BJ (cell line): ENCODE measurements at regions of chr19 and their contacts with region 1.

Region 1: DNA sequence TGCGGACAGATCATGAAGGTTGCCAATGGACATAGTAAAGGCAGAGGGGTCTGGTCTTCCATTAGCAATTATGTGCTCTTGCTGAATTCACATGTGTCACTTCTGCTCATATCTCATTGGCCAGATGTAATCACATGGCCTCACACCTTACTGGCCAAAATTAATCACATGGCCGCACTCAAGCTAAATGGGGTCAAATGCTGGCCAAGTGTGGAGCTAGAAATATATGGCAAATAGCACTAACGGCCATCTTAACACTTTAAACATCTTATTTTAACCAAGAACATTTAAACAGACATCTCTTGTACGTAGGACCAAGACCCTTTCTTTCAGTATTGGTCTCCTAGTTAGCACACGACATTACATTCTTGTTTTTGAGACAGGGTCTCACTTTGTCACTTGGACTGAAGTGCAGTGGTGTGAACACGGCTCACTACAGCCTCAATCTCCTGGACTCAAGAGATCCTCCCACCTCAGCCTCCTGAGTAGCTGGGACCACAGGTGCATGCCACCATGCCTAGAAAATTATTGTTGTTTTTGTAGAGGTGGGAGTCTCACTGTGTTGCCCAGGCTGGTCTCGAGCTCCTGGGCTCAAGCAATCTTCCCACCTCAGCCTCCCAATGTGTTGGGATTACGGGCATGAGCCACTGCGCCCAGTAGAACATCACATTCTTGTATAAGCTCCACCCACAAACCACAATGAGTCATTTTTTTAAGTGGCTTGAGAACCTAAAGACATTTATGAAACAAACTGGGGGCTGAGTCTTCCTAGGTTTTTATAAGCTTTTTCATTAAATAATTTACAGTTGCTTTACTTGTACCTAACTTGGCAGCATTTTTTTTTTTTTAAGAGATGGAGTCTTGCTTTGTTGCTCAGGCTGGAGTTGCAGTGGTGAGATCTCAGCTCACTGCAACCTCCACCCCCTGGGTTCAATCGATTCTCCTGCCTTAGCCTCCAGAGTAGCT is 2.9 kb upstream of the PTOV1 start:
- DNase-seq: peak; percentile 56
- H3K4me3 ChIP-seq: no peak overlapping the region
- H3K27me3 ChIP-seq: no peaks in the 10 kb centered on the region
- CTCF ChIP-seq: no peak

Region 2: DNA sequence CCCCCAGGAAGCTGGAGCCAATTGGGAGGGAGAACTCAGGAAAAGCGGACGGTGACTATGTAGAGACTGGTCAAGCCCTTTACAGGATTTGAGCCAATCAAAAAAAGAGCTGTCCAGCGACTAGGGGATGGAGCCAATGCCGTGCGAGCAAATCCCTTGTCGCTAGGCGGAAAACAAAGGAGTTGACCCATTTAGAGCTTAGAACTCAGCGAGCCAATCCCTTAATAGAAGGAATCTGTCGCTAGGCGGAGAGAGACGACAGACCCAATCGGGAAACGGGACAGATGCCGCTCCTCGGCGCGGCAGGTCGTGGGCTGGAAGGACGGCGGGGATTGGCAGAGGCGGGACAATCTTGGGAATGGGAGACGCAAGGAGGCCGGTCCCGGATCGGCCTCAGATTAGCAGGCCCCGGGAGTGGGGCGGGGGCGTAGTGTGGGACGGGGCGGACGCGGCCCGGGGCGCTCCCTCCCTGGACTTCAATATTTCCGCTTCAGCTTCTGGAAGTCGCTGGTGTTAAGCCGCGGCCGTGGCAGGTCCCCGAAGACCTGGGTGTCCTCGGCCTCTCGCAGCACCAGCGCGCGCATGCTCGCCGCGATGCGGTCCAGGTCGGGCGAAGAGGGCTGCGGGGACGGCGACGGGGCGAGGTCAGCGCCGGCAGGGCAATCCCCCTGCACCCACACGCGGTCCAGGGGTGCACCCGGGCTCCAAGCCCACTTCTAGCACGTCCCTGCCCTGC is 21.6 kb after region 1 on chr19:
- CTCF ChIA-PET with region 1: no interaction called
- POLR2A ChIA-PET with region 1: interaction called, 11 read pairs
- DNase-seq: peak; percentile 100
- H3K4me3 ChIP-seq: peak overlapping the region; percentile 45
- H3K27me3 ChIP-seq: no peaks in the 10 kb centered on the region
- CTCF ChIP-seq: no peak

Region 3: DNA sequence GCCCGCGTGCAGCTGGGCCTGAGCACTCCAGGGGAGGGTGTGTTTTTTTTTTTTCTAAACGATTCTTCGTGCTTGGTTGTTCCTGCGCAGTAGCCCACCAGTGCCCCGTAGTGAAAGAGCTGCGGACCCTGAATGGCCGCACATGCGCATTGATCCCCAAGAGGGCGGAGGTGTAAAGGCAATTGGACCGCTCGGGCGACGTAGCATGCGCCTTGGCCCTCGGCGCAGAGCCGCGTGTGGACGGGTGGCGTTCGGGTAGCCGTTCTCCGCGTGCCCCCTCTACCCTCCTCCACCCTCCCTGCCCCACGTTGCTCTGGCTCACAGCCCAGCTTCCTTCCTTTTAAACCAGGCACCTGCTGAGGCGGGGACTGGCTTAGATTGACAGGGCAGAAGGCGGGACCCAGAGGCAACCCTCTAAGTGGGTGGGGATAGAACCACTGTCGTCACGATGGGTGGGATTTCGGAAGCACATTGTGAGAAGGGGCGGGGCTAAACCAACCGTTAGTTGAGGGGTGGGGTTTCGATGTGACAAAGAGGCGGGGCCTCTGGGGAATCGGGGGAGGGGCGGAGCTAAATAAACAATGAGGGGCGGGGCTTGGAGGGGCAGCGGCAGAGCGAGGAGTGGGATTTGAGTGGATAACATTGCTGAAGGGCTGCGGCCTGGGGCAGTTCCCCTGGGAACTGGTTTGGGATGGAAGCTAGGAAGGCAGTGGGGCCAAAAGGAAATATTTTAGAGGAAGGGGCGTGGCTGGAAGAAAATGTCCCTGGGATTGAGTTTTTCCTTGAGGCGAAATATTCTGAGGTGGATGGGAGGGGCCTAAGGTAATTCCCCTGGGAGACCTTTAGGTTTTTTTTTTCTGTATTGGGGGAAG is 81.8 kb after region 1 on chr19:
- CTCF ChIA-PET with region 1: no interaction called
- POLR2A ChIA-PET with region 1: no interaction called
- DNase-seq: peak; percentile 73
- H3K4me3 ChIP-seq: peak overlapping the region; percentile 98
- H3K27me3 ChIP-seq: no peaks in the 10 kb centered on the region
- CTCF ChIP-seq: no peak

Region 4: DNA sequence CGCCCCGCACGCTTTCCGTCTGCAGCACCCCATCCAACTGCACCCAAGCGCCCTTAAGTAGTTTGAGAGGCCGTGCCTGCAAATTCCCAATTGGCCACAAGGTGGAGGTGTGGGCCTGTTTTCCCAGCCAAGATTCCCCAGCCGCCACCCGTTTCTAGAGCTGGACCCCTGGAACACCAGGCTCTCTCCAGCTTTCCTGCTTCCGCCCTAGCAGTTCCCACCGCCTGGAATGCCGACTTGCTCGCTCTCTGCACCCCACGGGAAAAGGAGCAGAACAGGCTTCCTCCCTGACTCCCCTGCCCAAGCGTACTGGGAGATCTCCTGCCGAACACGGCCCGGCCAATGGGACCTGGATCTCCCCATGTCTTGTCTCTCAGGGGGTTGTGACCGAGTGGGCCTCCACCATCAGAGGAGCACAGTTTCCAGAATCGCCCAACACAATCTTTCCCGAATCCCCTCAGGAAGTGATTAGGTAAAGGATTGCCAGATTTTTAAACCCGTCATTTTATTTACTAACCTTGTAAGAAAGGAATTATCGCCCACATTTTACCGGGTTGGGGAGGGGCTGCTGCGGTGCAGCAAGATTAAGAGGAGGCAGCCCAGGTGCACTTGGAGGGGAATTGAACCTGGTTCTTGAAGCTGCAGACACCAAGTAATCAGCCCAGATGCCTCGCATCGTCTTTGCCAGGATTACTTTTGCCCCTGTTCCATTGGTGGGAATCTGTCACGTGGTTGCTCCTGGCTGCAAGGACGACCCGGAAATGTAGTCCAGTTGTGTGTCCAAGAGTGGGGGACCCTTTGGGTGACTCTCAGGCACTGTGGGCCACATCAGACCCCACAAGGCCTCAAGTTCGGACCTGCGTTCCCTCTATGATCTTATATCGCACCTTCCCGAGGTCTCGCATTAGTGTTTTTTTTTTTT is 520.9 kb after region 1 on chr19:
- CTCF ChIA-PET with region 1: no interaction called
- POLR2A ChIA-PET with region 1: interaction called, 11 read pairs
- DNase-seq: peak; percentile 44
- H3K4me3 ChIP-seq: peak overlapping the region; percentile 86
- H3K27me3 ChIP-seq: no peaks in the 10 kb centered on the region
- CTCF ChIP-seq: peak; percentile 86